Activated CD4-positive, alpha-beta T cell treated with anti-CD3 and anti-CD28 coated beads, Interleukin-2, amount 10 ng/mL, durations not matched to agents 7 days and 5 days (primary cell): ENCODE measurements at regions of chr16 and their contacts with region 1.

Region 1: GRCh38 chr16:11689031-11689761 is 20.9 kb downstream of the SNN start:
- DNase-seq: no peak
- H3K4me3 Mint-ChIP-seq: no peak overlapping the region
- H3K27ac Mint-ChIP-seq: peak overlapping the region; percentile 68
- H3K4me1 Mint-ChIP-seq: peaks cover 17% of the 10 kb centered on the region
- H3K27me3 Mint-ChIP-seq: no peaks in the 10 kb centered on the region

Region 2: GRCh38 chr16:11658894-11659708 is 30.1 kb before region 1 on chr16:
- CTCF ChIA-PET with region 1: no interaction called
- POLR2A ChIA-PET with region 1: no interaction called
- DNase-seq: no peak
- H3K4me3 Mint-ChIP-seq: no peak overlapping the region
- H3K27ac Mint-ChIP-seq: no peak overlapping the region
- H3K4me1 Mint-ChIP-seq: peaks cover 15% of the 10 kb centered on the region
- H3K27me3 Mint-ChIP-seq: no peaks in the 10 kb centered on the region

Region 3: DNA sequence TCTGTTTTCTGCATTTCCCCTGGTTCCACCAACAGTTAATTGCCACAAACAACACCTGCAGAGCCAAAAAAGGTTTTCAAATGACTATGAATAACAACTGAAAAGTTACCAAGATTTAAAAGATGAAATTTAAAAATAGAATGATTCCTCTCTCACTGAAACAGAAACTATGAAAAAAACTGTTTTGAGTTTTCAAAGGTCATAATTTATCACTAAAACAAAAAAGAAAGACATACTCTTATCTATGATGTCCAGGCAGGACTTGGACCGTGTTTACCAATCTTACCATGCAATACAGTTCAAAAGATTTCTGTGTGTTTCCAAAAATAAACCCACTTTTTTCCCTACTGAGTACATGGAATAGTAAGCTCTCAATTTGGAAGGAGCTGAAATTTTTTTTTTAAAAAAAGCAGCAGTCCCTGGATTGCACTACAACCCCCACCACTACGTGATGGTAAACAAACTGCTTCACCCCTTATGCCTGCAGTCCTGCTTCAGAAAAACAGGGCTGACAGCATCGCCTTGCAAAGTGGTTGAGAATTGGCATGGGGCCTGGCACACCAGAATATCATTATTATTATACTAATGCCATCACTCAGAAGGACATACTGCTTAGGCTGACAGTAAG is 44.9 kb after region 1 on chr16:
- CTCF ChIA-PET with region 1: no interaction called
- POLR2A ChIA-PET with region 1: no interaction called
- DNase-seq: no peak
- H3K4me3 Mint-ChIP-seq: no peak overlapping the region
- H3K27ac Mint-ChIP-seq: no peak overlapping the region
- H3K4me1 Mint-ChIP-seq: peaks cover 77% of the 10 kb centered on the region
- H3K27me3 Mint-ChIP-seq: no peaks in the 10 kb centered on the region

Region 4: DNA sequence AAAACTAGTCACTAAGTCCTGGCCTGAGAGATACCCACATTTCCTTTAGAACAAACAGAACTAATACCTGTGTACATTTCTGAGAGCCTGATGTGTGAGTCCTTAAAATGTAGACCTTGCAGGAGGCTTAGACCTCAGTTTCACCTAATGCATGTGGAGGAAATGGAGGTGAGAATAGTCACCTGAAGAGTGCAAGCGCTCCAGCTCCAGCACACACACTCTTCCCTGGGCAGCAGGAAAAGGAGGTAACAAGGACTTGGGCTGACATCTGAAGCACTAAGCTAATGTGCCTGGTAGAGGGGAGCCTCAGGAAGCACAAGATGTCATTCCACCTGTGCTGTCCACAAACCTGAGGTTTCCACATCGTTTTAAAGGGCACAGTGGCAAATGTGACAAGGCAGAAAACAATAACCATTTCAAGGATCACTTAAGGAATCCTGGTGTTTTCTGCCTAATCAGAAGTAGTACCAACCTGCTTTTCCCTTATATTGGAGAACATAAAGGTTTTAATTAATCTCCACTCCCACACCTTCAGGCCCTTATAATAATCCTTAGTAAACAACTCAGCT is 179.3 kb after region 1 on chr16:
- CTCF ChIA-PET with region 1: no interaction called
- POLR2A ChIA-PET with region 1: interaction called, 12 read pairs
- DNase-seq: no peak
- H3K4me3 Mint-ChIP-seq: no peak overlapping the region
- H3K27ac Mint-ChIP-seq: no peak overlapping the region
- H3K4me1 Mint-ChIP-seq: peaks cover 4% of the 10 kb centered on the region
- H3K27me3 Mint-ChIP-seq: no peaks in the 10 kb centered on the region